ENCODE measurements at regions of chr7 and their contacts with region 1.

Region 1: GRCh38 chr7:43260980-43261878 is 148.8 kb downstream of the HECW1 start:
- DNase-seq: peak in 1 of 2 donors; percentile 76
- H3K4me3 ChIP-seq: no peak overlapping the region
- H3K27ac ChIP-seq: no peak overlapping the region
- H3K4me1 ChIP-seq: no peaks in the 10 kb centered on the region
- H3K27me3 ChIP-seq: no peaks in the 10 kb centered on the region
- CTCF ChIP-seq: peak; percentile 71 to 78 (median 76)
- POLR2A ChIP-seq: no peak

Region 2: GRCh38 chr7:41940760-41941343 is 1320.4 kb before region 1 on chr7:
- intact Hi-C with region 1: loop called (anchors 10 kb)
- DNase-seq: no peak
- H3K4me3 ChIP-seq: no peak overlapping the region
- H3K27ac ChIP-seq: no peak overlapping the region
- H3K4me1 ChIP-seq: no peaks in the 10 kb centered on the region
- H3K27me3 ChIP-seq: no peaks in the 10 kb centered on the region
- CTCF ChIP-seq: peak; percentile 81 to 87 (median 82)
- POLR2A ChIP-seq: no peak

Region 3: DNA sequence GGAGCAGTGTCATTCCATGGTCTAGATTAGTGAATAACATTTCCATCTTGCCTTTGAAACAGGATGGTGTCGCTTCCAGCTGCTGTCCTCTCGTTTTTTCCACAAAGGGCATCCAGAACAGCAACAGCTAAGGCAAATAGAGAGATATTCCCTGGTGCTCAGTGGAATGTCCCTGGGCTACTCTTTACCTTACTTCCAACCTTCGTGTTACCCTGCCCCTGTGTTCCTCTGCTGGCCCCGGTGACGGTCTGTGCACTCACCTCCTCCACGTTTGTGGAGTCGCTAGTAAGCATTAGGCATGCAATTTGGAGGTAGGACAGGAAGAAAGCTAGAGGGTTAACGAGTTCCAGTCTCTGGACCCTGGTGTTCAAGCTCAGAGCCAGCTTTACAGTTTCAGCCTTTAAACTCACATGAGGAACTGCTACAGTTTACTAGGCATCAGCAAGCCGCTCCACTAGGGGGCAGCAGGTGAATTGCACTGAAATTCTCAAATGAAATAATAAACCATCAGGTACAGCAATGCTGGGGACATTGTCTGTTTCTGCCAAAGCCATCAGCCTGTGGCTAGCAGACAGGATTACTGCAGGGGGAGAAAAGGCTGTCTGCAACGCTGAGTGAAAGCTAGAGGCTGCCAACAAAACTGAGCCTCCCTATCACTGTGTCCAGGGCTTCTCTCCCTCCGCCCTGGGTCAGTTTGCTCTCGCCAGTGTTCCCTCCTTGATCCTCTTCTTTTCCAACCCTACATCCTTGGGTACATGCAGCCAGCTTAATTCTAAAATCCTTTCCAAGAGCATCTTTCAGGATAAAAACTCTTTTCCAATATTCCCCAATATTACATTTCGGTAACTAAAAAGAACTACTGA is 320.0 kb before region 1 on chr7:
- intact Hi-C with region 1: loop called (anchors 5 kb)
- DNase-seq: no peak
- H3K4me3 ChIP-seq: no peak overlapping the region
- H3K27ac ChIP-seq: no peak overlapping the region
- H3K4me1 ChIP-seq: no peaks in the 10 kb centered on the region
- H3K27me3 ChIP-seq: no peaks in the 10 kb centered on the region
- CTCF ChIP-seq: peak; percentile 28 to 83 (median 80)
- POLR2A ChIP-seq: no peak